Psoas muscle (tissue), 8 donors: ENCODE measurements at regions of chr17 and their contacts with region 1.

Region 1: GRCh38 chr17:27879987-27880608 is 13.1 kb downstream of the LYRM9 start:
- DNase-seq: peak; percentile 64 to 68
- ATAC-seq: peak; percentile 80 to 91 (median 87)
- H3K4me3 ChIP-seq: no peak overlapping the region
- H3K27ac ChIP-seq: no peak overlapping the region
- H3K4me1 ChIP-seq: no peaks in the 10 kb centered on the region
- H3K27me3 ChIP-seq: no peaks in the 10 kb centered on the region
- CTCF ChIP-seq: peak; percentile 72

Region 2: GRCh38 chr17:27760069-27760885 is 119.8 kb before region 1 on chr17:
- intact Hi-C with region 1: loop called (anchors 5 kb)
- DNase-seq: peak; percentile 63 to 76
- ATAC-seq: peak in 3 of 4 donors; percentile 46 to 65 (median 56)
- H3K4me3 ChIP-seq: no peak overlapping the region
- H3K27ac ChIP-seq: no peak overlapping the region
- H3K4me1 ChIP-seq: no peaks in the 10 kb centered on the region
- H3K27me3 ChIP-seq: no peaks in the 10 kb centered on the region
- CTCF ChIP-seq: peak; percentile 91

Region 3: GRCh38 chr17:27800522-27800921 is 79.6 kb before region 1 on chr17 and contains the start of gene NOS2:
- intact Hi-C with region 1: loop called (anchors 1 to 5 kb)
- DNase-seq: no peak
- ATAC-seq: no peak
- H3K4me3 ChIP-seq: no peak within 1 kb of the TSS
- H3K27ac ChIP-seq: no peak within 1 kb of the TSS
- H3K4me1 ChIP-seq: no peaks in the 10 kb centered on the region
- H3K27me3 ChIP-seq: peaks cover 0 to 5% (median 3%) of the 10 kb centered on the region in 3 donors
- CTCF ChIP-seq: no peak
- total RNA-seq, gene NOS2: 0.06 to 0.79 (median 0.29) TPM

Region 4: DNA sequence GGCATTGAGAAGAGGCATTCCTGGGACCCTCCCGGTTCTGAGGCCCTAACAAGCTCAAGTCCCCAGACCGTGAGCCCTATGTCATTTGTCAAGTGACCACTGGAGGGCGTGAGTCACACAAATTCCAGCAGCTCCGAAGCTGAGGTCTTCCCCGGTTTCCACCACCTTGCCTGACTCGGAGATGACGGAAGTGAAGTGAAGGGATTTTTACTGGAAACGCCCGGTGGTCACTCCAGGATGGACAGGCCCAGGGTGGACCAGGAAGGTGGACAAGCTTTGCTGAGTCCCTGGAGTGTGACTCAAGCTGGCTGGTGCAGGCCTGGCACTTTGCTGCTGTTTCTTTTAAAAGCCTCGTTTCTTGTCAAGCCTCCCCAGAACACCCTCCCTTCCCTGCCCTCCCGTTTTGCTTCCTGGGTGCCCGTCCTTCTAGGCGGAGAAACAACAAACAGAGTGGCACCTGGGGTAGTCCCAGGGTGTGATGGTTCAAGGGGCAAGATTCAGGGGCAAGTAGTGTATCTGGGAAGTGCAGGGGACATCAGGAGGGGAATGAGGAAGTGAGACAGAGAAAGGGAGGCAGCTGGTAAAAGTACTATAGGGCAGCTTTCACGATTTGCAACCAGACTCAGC is 74.5 kb before region 1 on chr17:
- intact Hi-C with region 1: loop called (anchors 1 to 5 kb)
- DNase-seq: peak; percentile 75 to 78
- ATAC-seq: peak; percentile 85 to 95 (median 92)
- H3K4me3 ChIP-seq: peak overlapping the region; percentile 47
- H3K27ac ChIP-seq: no peak overlapping the region
- H3K4me1 ChIP-seq: no peaks in the 10 kb centered on the region
- H3K27me3 ChIP-seq: peaks cover 0 to under 1% (median 0%) of the 10 kb centered on the region in 3 donors
- CTCF ChIP-seq: peak; percentile 76